ENCODE measurements at regions of chr9 and their contacts with region 1.

Region 1: DNA sequence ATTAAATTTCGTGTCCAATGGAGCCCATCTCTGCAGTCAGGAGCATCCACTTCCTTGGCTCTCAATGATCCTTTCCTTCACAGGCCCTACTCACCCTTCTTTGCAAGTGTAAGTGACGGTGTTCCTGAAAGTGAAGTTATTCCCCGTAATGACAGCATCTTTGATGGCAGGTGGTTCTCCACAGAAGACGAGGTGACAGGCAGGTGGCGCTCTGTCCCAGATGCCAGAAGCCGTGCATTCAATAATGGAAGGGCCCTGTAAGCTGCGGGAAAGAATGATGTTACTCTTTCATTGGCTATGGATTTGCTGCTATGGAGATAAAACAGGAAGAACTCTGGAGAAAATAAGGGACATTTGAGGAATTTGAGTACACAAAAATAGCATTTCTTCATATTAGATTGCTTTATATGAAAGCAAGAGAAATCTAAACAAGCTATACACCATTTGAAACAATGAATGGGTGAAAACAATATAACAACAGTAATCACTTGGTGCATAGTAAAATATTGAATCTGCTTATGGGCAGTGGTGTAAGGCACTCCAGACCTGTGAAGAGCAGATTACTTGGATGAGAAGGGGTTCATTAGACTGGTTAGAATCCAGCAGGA is 89.9 kb upstream of the TXNDC8 start:
- DNase-seq: no peak
- H3K4me3 ChIP-seq: no peak overlapping the region
- CTCF ChIP-seq: peak; percentile 60

Region 2: DNA sequence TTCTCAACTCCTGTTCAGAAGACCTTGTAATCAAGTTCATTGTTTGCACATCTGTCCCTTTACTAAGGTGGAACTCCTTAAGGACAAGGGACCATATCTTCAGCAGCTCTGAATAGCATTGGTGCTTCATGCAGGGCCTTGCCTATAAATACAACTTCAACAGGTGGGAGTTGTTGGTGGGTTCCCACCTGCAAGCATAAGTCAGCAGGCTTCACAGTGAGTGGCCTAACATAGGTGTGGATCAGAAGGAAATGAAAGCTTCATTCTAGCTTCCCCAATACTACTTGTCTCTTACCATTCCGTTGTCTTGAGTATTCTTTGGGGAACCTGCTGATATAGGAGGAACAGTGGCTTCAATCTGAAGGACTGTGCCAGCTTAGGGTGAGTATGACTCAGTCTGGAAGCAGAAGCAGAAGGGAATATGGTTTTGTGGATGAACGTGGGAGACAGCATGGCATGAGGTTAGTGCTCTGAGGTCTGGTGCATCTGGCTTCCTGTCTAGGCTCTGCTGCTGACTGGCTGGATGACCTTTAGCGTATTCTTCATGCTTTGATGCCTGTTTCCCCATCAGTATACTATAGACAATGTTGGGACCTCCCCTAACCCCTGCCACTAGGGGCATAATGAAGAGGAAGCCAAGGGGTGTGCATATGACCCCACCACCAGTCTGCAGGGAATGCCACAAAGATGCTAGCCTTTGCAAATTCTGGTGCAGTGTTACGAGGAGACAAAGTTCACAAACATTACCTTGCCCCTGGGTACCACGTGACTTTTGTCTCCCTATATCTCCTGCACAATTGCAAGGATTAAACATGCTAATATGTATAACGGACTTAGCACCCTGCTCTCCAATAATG is 455.3 kb before region 1 on chr9:
- CTCF ChIA-PET with region 1: no interaction called
- POLR2A ChIA-PET with region 1: no interaction called
- DNase-seq: no peak
- H3K4me3 ChIP-seq: no peak overlapping the region
- CTCF ChIP-seq: no peak

Region 3: DNA sequence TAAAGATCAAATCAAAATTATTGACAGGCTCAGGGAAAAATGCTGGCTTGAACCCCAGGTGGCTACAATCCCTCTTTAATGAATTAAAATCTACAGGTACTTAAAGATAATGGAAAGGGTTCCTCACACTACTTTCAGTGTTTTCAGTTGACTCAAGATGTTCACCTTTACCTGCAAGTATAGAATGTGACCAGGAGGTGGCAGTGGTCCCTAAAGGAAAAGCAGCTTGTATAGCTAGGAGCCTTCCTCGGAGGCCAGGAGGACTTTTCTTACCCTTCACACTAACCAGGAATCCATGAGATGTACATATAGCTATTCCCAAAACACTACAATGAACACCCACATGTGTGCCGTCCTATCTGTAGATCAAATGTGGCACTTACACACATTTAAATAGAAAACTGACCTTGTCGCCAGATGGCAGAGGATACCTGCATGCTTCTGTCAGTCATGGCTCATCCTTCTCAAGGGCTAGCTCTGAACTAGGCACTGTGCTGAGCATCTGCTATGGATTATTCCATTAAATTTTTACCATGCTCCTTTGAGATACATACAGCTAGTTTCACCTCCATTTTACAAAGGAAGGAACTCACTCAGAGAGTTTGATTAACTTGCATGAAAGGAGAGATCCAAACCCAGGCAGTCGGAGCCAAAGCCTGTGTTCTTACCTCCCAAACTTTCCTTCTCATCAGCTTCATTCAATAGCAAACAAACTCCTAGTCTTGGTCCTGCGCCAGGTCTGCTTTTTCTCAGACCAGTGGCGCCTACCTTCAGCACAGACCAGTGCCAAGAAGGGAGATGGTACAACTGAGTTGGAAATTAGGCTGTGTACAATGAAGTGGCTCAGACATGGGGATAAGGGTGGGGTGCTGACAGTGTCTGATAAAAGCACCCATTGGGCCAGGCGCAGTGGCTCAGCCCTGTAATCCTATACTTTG is 244.1 kb before region 1 on chr9:
- CTCF ChIA-PET with region 1: interaction called, 18 read pairs
- POLR2A ChIA-PET with region 1: no interaction called
- DNase-seq: peak; percentile 12
- H3K4me3 ChIP-seq: no peak overlapping the region
- CTCF ChIP-seq: peak; percentile 74

Region 4: GRCh38 chr9:110308633-110309038 is 119.0 kb before region 1 on chr9:
- CTCF ChIA-PET with region 1: no interaction called
- POLR2A ChIA-PET with region 1: no interaction called
- DNase-seq: no peak
- H3K4me3 ChIP-seq: no peak overlapping the region
- CTCF ChIP-seq: no peak

Region 5: DNA sequence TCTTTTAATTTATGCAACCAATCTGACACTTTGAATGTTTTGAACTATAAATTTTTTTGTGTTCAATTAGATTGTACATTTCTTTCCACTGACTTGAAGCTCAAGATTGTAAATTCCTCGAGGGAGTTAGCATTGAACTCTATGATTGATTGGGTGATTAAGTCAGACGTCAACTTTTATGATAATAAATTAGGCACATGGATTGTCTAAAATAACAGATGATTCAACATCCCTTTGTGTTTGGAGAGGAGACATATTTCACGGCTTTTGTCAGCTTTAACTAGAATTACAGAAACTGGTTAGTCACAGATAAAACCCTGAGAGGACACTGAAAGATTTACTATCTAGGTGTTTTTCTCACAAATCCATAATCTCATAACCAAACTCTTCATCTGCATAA is 57.3 kb before region 1 on chr9:
- CTCF ChIA-PET with region 1: no interaction called
- POLR2A ChIA-PET with region 1: no interaction called
- DNase-seq: no peak
- H3K4me3 ChIP-seq: no peak overlapping the region
- CTCF ChIP-seq: no peak

Region 6: DNA sequence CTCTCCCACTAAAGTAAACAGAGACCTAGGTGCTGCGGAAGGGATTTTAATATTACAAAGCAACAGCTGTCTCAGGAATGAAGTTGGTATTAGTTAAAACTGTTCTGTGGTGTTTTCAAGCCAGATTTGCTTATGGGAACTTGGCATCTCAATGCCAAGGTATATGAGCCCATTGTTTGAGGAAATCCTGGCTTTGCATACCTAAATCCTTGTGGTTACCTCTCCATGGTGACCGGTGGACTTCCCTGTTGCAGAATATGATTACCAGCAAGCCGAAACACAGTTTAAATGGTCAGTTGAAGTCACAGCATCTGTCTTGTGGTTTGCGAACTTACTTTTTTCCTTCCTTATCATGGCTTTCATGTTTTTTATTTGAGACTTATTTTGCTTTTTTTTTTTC is 27.6 kb before region 1 on chr9:
- CTCF ChIA-PET with region 1: no interaction called
- POLR2A ChIA-PET with region 1: no interaction called
- DNase-seq: no peak
- H3K4me3 ChIP-seq: no peak overlapping the region
- CTCF ChIP-seq: no peak

Region 7: DNA sequence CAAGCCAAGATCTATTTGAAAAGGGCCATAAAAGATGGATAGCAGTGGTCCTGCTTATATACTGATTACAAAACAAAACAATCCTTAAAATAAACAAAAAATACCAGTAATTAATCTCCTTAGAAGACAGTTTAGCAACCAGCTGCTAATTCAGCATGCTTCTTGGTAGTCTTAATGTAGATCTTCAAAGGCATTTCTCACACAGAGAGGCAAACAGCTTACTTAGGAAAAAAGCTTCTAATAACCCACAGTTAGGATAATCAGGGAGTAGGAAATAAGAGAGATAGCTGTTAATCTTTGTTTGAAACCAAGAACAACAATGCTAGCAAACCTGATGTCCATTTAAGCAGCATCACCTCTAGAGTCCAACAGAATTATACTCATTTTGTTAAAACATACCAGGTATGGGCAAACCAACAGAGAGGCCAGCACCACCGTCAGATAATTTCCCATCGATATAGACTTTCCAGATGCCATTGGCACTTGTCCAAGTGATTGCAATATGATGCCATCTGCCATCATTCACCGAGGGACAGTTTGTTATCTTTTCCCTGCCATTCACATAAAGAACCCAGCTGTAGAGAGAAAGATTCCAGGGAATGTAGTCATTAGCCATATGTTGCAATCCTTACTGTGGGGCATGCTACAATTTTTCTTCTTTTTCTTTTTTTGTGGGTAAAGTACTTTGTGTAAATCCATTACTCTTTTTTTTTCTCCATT is 15.7 kb after region 1 on chr9:
- CTCF ChIA-PET with region 1: interaction called, 16 read pairs
- POLR2A ChIA-PET with region 1: no interaction called
- DNase-seq: peak; percentile 37
- H3K4me3 ChIP-seq: no peak overlapping the region
- CTCF ChIP-seq: no peak

Region 8: DNA sequence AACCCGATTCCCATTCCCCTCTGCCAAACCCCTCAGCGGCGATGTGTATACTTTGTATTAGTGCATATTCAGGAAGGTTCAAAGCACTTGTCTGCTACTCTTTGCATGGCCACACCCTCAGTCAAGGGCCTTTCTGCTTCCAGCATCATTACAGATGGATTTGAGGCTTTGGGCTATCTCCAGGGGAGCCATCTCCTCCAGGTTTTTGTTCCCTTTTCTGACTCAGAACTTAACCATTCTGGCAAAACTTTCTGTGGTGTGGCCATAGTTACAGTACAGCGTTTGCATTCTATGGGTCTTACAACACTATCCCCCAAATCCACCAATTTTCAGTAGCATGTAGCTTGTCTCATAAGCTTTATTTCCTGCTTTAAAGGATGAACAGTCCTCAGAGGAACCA is 187.9 kb after region 1 on chr9:
- CTCF ChIA-PET with region 1: interaction called, 44 read pairs
- POLR2A ChIA-PET with region 1: no interaction called
- DNase-seq: no peak
- H3K4me3 ChIP-seq: no peak overlapping the region
- CTCF ChIP-seq: no peak

Region 9: DNA sequence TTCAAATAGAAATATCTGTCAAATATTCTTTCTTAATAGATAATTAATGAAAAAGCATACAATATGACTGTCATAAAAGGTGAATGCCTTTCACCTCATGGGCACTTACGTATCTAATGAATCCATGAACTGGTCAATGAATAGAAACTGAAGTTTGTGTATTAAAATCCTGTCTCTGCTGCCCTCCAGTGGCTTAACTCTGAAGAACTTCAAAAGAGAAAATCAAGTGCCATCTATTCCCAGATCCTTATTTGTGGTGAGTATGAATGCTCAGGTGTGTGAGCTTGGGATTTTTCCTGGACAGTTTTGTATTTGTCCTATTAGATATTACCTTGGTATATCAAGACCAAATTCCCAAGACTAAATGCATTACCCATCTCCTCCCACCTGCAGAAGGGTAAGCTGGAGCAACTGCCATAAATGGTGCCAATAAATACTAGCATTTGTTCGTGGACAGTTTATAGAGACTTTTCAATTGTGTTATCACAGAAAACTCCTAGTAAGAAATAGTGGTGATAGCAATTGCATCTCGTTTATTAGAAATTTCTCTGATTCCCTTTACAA is 195.9 kb after region 1 on chr9:
- CTCF ChIA-PET with region 1: interaction called, 57 read pairs
- POLR2A ChIA-PET with region 1: no interaction called
- DNase-seq: no peak
- H3K4me3 ChIP-seq: no peak overlapping the region
- CTCF ChIP-seq: peak; percentile 27